Colonic mucosa (tissue), 4 donors: ENCODE measurements at regions of chr14 and their contacts with region 1.

Region 1: DNA sequence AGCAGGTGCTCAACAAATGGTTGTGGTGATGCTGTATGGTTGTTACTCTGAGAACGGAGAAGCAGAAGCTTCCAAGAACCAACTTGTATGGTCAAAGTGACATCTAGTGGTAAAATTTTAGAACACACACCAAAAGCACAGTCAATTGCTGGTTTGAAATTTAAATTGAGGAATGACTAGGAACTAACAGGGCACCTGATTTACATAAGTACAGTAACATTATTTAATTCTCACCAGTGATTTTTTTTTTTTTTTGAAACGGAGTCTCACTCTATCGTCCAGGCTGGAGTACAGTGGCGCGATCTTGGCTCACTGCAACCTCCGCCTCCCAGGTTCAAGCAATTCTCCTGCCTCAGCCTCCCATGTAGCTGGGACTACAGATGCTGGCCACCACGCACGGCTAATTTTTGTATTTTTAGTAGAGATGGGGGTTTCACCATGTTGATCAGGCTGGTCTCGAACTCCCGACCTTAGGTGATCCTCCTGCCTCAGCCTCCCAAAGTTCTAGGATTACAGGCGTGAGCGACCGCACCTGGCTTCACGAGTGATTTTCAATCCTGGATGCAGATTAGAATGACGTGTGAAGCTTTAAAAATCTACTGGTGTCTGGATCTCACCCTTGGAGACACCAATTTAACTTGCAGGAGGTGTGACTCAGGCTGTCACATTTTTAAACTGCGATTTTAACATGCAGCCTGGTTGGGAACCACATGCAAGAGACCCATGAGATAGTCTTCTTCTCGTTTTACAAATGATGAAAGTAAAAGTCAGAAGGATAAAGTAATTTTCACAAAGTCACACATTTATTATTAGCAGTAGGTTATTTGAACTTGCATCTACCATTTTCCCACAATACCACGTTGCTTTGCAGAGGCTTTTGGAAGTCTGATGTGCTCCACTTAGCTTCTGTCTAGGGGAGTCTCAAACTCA is 14.1 kb upstream of the NUMB start:
- DNase-seq: no peak
- H3K4me3 ChIP-seq: no peak overlapping the region
- H3K27ac ChIP-seq: no peak overlapping the region
- H3K4me1 ChIP-seq: no peaks in the 10 kb centered on the region
- H3K27me3 ChIP-seq: no peaks in the 10 kb centered on the region
- CTCF ChIP-seq: peak; percentile 53

Region 2: GRCh38 chr14:73173092-73173735 is 299.2 kb before region 1 on chr14:
- intact Hi-C with region 1: loop called (anchors 10 kb)
- DNase-seq: no peak
- H3K4me3 ChIP-seq: no peak overlapping the region
- H3K27ac ChIP-seq: no peak overlapping the region
- H3K4me1 ChIP-seq: no peaks in the 10 kb centered on the region
- H3K27me3 ChIP-seq: no peaks in the 10 kb centered on the region
- CTCF ChIP-seq: peak; percentile 26

Region 3: GRCh38 chr14:73295198-73295796 is 177.2 kb before region 1 on chr14:
- intact Hi-C with region 1: loop called (anchors 5 kb)
- DNase-seq: no peak
- H3K4me3 ChIP-seq: no peak overlapping the region
- H3K27ac ChIP-seq: no peak overlapping the region
- H3K4me1 ChIP-seq: peaks cover 5% of the 10 kb centered on the region
- H3K27me3 ChIP-seq: no peaks in the 10 kb centered on the region
- CTCF ChIP-seq: peak; percentile 61